T-cell (primary cell): ENCODE measurements at regions of chr2 and their contacts with region 1.

Region 1: GRCh38 chr2:177629357-177630024 is 236.9 kb downstream of the AGPS start:
- DNase-seq: no peak
- ATAC-seq: no peak
- H3K4me3 ChIP-seq: no peak overlapping the region
- H3K4me3 Mint-ChIP-seq: no peak overlapping the region
- H3K27ac ChIP-seq: no peak overlapping the region
- H3K27ac Mint-ChIP-seq: no peak overlapping the region
- H3K4me1 ChIP-seq: no peaks in the 10 kb centered on the region
- H3K4me1 Mint-ChIP-seq: no peaks in the 10 kb centered on the region
- H3K27me3 ChIP-seq: peaks cover 0 to 7% of the 10 kb centered on the region in 2 experiments
- H3K27me3 Mint-ChIP-seq: peaks cover 19 to 21% of the 10 kb centered on the region in 2 donors

Region 2: DNA sequence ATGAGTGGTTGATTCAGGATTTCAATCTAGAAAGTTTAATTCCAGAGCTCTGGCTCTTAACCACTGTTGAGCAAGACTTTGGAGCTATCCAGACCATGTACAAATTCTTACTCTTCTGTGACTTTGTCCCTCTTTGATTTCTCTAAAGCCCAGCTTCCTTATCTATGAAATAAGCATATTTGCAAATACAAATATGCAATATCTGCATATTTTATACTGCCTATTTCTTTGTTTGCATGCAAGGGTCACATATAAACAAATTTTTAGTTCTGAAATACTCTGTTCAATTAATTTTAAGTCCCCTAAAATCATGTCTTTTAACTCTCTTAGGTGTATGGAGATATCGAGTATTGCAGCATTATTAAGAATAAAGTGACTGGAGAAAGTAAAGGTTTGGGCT is 488.2 kb after region 1 on chr2:
- CTCF ChIA-PET with region 1: no interaction called
- POLR2A ChIA-PET with region 1: interaction called in 1 of 2 experiments, 13 read pairs
- DNase-seq: no peak
- ATAC-seq: no peak
- H3K4me3 ChIP-seq: no peak overlapping the region
- H3K4me3 Mint-ChIP-seq: no peak overlapping the region
- H3K27ac ChIP-seq: no peak overlapping the region
- H3K27ac Mint-ChIP-seq: no peak overlapping the region
- H3K4me1 ChIP-seq: peaks cover 2 to 4% of the 10 kb centered on the region in 2 experiments
- H3K4me1 Mint-ChIP-seq: peaks cover 37 to 47% (median 38%) of the 10 kb centered on the region in 3 donors
- H3K27me3 ChIP-seq: no peaks in the 10 kb centered on the region
- H3K27me3 Mint-ChIP-seq: no peaks in the 10 kb centered on the region